ENCODE measurements at regions of chr2 and their contacts with region 1.

Region 1: DNA sequence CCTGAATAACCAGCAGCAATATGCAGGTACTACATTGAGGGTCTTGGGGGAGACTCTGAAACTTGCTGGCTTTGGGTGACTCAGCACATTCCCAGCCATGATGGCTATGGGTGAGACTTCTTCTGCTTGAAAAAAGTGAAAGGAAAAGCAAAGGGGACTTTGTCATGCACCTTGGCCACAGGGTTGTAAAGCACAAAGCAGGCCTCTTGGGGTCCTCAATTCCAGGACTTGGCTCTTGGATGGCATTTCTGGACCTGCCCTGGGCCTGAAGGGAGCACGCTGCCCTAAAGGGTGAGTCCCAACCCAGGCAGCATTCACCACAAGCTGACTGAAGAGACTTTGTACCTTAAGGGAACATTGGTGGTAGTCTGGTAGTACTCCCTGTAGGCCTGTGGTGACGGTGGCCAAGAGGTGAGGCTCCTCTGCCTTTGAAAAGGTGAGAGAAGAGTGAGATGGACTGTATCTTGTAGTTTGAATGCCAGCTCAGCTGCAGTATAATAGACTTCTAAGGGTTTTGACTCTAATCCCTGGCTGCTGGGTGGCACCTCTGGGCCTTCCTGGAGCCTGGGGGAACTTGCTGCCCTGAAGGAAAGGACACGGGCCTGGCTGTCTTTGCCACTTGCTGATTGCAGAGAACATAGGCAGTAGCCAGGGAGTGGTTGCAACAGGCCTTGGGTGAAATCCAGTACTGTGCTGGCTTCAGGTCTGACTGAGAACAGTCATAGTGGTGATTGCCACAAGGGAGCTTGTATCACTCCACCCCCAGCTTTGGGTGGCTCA is 36.5 kb upstream of the CYTIP start:
- DNase-seq: no peak

Region 2: DNA sequence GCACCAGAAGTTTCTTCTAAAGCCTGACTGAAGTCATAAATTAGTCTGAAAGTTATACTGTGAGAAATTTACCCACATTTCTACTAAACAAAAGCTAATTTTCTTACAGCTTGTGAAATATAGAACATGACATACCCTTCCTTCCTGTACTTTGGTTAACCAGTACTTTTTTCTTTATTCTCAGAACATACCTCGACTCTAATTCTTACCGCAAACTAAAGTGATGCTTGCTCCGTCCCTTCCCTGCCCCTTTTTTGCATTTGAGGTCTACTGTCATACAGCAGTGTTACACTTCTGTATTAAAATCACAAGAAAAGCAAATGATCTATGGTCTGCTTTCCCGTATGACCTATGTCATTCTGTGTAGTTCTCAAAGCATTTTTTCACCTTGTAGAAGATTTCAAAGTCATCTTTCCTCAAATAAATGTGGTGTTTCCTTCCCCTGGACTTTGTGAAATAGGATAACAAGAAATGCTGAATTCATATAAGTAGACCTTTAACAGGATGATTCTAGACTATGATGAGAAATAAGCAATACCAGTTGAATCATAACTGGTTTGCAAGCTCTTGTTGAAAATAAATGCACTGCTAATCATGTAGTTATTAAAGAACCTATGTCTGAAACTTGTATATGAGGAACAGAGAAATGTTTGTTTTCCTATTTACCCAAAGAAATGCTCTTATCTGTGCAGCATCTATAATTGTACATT is 66.9 kb before region 1 on chr2:
- intact Hi-C with region 1: loop called (anchors 10 kb)
- DNase-seq: no peak